Activated CD4-positive, alpha-beta T cell treated with anti-CD3 and anti-CD28 coated beads for 36 hours (primary cell): ENCODE measurements at regions of chr10 and their contacts with region 1.

Region 1: GRCh38 chr10:117710181-117710798 is 167.7 kb downstream of the EMX2 start:
- DNase-seq: peak; percentile 9
- ATAC-seq: no peak
- H3K4me3 Mint-ChIP-seq: no peak overlapping the region
- H3K27ac Mint-ChIP-seq: no peak overlapping the region
- H3K4me1 Mint-ChIP-seq: no peaks in the 10 kb centered on the region
- H3K27me3 Mint-ChIP-seq: peaks cover 14% of the 10 kb centered on the region

Region 2: DNA sequence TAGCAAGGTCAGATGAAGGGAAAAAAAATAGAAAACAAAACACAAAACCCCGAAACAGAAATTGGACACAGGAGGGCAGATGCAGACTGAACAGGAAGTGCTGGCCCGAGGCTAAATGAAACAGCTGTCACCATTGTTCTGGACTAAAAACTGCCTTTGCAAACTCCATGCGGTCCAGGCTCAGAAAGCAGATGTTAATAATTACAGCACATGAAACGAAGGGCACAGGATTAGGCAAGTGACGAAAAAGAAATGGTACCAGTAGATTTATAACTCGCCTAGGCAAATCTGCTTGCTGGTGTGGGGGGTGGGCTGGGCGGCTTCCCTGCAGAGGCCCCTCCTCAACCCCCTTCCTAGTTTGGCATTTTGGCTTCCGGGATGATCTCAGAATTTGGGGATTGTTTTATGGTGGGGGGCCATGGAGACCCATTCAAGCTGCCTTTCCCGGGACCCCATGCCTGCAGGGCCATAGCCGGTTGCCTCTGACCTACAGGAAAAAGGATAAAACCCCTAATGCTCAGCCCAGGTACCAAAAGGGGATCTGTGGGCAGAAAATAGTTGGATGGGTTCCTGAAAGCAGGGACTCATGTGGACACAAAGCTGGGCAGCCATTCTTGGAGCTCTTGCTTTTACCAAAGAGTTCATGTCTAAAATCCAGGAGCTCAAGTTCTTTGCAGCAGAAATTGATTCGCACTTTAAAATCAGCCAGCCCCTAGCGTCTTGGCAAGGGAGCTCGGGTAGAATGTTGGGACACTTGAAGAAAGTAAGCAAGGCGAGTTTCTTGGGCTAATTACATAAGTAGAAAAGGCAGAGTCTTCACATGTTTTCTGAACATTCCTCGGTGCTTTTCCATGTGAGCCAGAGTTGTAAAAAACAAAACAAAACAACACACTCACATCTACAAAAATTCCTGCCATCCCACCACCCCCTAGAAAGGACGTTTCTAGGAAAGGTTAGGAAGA is 206.8 kb before region 1 on chr10:
- CTCF ChIA-PET with region 1: no interaction called
- POLR2A ChIA-PET with region 1: no interaction called
- intact Hi-C with region 1: no loop called
- DNase-seq: no peak
- ATAC-seq: no peak
- H3K4me3 Mint-ChIP-seq: no peak overlapping the region
- H3K27ac Mint-ChIP-seq: no peak overlapping the region
- H3K4me1 Mint-ChIP-seq: no peaks in the 10 kb centered on the region
- H3K27me3 Mint-ChIP-seq: peaks cover 22% of the 10 kb centered on the region

Region 3: GRCh38 chr10:118106426-118106825 is 396.1 kb after region 1 on chr10:
- CTCF ChIA-PET with region 1: no interaction called
- POLR2A ChIA-PET with region 1: no interaction called
- intact Hi-C with region 1: loop called in 1 of 2 experiments (anchors 10 kb)
- DNase-seq: peak; percentile 5
- ATAC-seq: no peak
- H3K4me3 Mint-ChIP-seq: no peak overlapping the region
- H3K27ac Mint-ChIP-seq: no peak overlapping the region
- H3K4me1 Mint-ChIP-seq: no peaks in the 10 kb centered on the region
- H3K27me3 Mint-ChIP-seq: peaks cover 27% of the 10 kb centered on the region